Activated CD8-positive, alpha-beta memory T cell treated with anti-CD3 and anti-CD28 coated beads, Interleukin-2, amount 10 ng/mL, durations not matched to agents 7 days and 5 days (primary cell): ENCODE measurements at regions of chr5 and their contacts with region 1.

Region 1: GRCh38 chr5:131270809-131271208 is 7.0 kb downstream of the CDC42SE2 start:
- DNase-seq: no peak
- ATAC-seq: no peak
- H3K4me3 Mint-ChIP-seq: peak overlapping the region; percentile 83
- H3K27ac Mint-ChIP-seq: peak overlapping the region; percentile 92
- H3K4me1 Mint-ChIP-seq: peaks cover 64% of the 10 kb centered on the region
- H3K27me3 Mint-ChIP-seq: no peaks in the 10 kb centered on the region

Region 2: DNA sequence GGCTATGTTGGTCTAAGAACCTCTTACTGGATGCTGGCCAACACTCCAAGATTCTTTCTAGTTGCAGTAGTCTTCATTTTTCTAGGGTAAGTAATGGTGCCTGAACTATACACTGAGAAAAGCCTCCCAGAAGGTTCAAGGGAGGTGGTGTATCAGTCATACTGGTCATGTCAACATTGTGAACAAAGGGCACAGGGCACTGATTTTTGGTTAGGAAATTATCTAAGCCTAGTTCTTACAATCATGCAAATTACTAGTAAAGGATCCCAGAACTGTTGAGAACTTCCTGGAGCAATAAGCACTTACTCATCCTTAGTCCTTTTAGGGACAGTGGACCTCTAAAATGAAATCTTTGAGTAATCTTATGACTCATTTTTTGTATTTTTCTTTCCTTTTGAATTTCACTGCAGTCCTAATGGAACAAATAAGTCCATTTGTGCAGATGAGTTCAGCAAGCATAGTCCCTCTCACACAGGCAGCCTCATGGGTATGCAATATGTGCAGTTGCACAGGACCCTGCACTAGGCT is 28.0 kb before region 1 on chr5:
- CTCF ChIA-PET with region 1: no interaction called
- DNase-seq: no peak
- ATAC-seq: peak; percentile 42
- H3K4me3 Mint-ChIP-seq: no peak overlapping the region
- H3K27ac Mint-ChIP-seq: no peak overlapping the region
- H3K4me1 Mint-ChIP-seq: peaks cover 7% of the 10 kb centered on the region
- H3K27me3 Mint-ChIP-seq: no peaks in the 10 kb centered on the region

Region 3: GRCh38 chr5:131258733-131259132 is 12.1 kb before region 1 on chr5:
- CTCF ChIA-PET with region 1: interaction called, 94 read pairs
- DNase-seq: no peak
- ATAC-seq: no peak
- H3K4me3 Mint-ChIP-seq: peak overlapping the region; percentile 73
- H3K27ac Mint-ChIP-seq: peak overlapping the region; percentile 91
- H3K4me1 Mint-ChIP-seq: peaks cover 62% of the 10 kb centered on the region
- H3K27me3 Mint-ChIP-seq: no peaks in the 10 kb centered on the region

Region 4: DNA sequence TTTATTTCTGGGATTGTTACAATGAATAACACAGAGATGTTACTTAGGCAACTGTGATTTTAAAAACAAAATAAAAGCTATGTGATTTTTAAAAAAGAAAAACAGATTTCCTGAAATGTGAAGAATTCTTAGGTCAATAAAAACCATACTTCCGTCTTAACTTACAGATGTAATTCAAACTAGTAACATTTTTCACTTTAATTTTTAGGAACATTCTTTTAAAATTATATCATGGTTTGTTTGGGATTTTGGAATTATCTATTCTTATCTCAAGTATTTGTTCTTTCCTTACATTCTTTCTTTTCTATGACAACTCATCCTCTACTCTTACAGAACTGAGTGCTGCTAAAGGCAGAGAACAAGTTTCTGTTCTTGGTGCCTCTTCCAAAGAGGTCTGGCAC is 204.7 kb after region 1 on chr5:
- CTCF ChIA-PET with region 1: no interaction called
- DNase-seq: no peak
- ATAC-seq: no peak
- H3K4me3 Mint-ChIP-seq: no peak overlapping the region
- H3K27ac Mint-ChIP-seq: no peak overlapping the region
- H3K4me1 Mint-ChIP-seq: peaks cover 13% of the 10 kb centered on the region
- H3K27me3 Mint-ChIP-seq: no peaks in the 10 kb centered on the region